ENCODE measurements at regions of chr7 and their contacts with region 1.

Region 1: GRCh38 chr7:121372376-121373010 is 23.6 kb downstream of the FAM3C start:
- DNase-seq: peak; percentile 64
- ATAC-seq: peak; percentile 69
- H3K4me3 ChIP-seq: peak overlapping the region in 3 of 5 experiments; percentile 6 to 50 (median 8)
- H3K4me3 Mint-ChIP-seq: peak overlapping the region; percentile 66
- H3K27ac ChIP-seq: peak overlapping the region; percentile 89 to 94
- H3K27ac Mint-ChIP-seq: peak overlapping the region; percentile 86
- H3K4me1 ChIP-seq: peaks cover 87% of the 10 kb centered on the region in 2 donors
- H3K4me1 Mint-ChIP-seq: peaks cover 80% of the 10 kb centered on the region
- H3K27me3 ChIP-seq: no peaks in the 10 kb centered on the region
- H3K27me3 Mint-ChIP-seq: no peaks in the 10 kb centered on the region
- CTCF ChIP-seq: no peak

Region 2: DNA sequence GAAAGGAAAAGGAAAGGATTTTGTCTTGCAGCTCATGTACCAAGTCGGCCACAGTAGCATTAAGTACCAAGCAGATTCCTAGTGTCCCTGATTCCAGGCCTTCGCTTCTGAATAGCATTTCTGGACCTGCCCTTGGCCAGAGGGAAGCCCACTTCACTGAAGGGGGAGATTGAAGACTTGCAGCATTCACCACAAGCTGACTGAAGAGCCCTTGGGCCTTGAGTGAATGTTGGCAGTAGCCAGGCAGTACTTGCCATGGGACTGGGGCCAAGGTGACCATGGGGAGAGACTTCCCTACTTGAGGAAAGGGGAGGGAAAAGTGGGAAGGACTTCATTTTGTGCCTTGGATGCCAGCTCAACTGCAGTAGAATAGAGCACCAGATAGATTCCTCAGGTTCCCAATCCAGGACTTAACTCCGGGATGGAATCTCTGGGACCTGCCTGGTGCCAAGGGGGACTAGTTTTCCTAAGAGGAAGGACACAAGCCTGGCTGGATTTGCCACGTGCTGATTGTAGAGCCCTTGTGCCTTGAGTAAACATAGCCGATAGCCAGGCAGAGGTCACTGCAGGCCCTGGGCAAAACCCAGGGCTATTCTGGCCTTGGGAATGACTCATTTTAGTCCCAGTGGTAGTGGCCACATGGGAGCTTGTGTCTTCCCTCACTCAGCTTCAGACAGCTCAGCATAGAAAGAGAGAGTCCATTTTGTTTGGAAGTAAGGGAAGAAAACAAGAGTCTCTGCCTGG is 1241.2 kb before region 1 on chr7:
- CTCF ChIA-PET with region 1: no interaction called
- POLR2A ChIA-PET with region 1: no interaction called
- intact Hi-C with region 1: no loop called
- DNase-seq: no peak
- ATAC-seq: no peak
- H3K4me3 ChIP-seq: no peak overlapping the region
- H3K4me3 Mint-ChIP-seq: no peak overlapping the region
- H3K27ac ChIP-seq: no peak overlapping the region
- H3K27ac Mint-ChIP-seq: no peak overlapping the region
- H3K4me1 ChIP-seq: no peaks in the 10 kb centered on the region
- H3K4me1 Mint-ChIP-seq: no peaks in the 10 kb centered on the region
- H3K27me3 ChIP-seq: no peaks in the 10 kb centered on the region
- H3K27me3 Mint-ChIP-seq: no peaks in the 10 kb centered on the region
- CTCF ChIP-seq: no peak

Region 3: GRCh38 chr7:120293027-120293426 is 1079.5 kb before region 1 on chr7:
- CTCF ChIA-PET with region 1: no interaction called
- POLR2A ChIA-PET with region 1: no interaction called
- intact Hi-C with region 1: no loop called
- DNase-seq: no peak
- ATAC-seq: no peak
- H3K4me3 ChIP-seq: no peak overlapping the region
- H3K4me3 Mint-ChIP-seq: no peak overlapping the region
- H3K27ac ChIP-seq: no peak overlapping the region
- H3K27ac Mint-ChIP-seq: no peak overlapping the region
- H3K4me1 ChIP-seq: no peaks in the 10 kb centered on the region
- H3K4me1 Mint-ChIP-seq: no peaks in the 10 kb centered on the region
- H3K27me3 ChIP-seq: no peaks in the 10 kb centered on the region
- H3K27me3 Mint-ChIP-seq: no peaks in the 10 kb centered on the region
- CTCF ChIP-seq: no peak

Region 4: GRCh38 chr7:120512701-120513100 is 859.8 kb before region 1 on chr7:
- CTCF ChIA-PET with region 1: no interaction called
- POLR2A ChIA-PET with region 1: no interaction called
- intact Hi-C with region 1: no loop called
- DNase-seq: no peak
- ATAC-seq: no peak
- H3K4me3 ChIP-seq: no peak overlapping the region
- H3K4me3 Mint-ChIP-seq: no peak overlapping the region
- H3K27ac ChIP-seq: no peak overlapping the region
- H3K27ac Mint-ChIP-seq: no peak overlapping the region
- H3K4me1 ChIP-seq: no peaks in the 10 kb centered on the region
- H3K4me1 Mint-ChIP-seq: no peaks in the 10 kb centered on the region
- H3K27me3 ChIP-seq: no peaks in the 10 kb centered on the region
- H3K27me3 Mint-ChIP-seq: no peaks in the 10 kb centered on the region
- CTCF ChIP-seq: no peak

Region 5: DNA sequence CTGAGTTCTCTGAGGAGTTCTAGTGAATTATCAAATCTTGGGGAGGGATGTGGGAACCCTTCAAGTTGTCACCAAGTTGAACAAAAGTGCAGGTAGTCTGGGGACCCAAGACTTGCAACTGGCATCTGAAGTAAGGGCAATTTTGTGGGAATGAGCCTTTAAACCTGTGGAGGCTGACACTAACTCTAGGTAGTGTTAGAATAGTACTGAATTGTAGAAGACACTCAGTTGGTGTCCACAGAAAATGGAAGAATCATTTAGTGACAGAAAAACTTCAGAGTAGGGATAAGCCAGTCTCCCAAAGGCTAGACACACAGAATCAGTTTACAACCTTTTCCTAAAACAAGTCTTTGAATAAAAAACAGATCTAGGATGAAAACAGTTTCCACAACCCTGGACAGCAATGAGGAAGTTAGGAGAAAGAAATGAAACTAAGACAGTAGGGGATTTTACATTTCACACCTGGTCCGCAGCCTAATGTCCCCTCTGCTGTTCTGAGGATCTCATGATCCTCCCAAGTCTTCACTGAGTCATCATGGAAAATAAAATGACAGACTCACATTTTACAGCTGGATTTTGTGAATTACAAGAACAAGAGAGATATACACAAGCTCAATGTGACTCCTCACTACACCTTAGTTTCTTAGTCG is 444.9 kb before region 1 on chr7:
- CTCF ChIA-PET with region 1: no interaction called
- POLR2A ChIA-PET with region 1: no interaction called
- intact Hi-C with region 1: no loop called
- DNase-seq: peak; percentile 51
- ATAC-seq: peak; percentile 39
- H3K4me3 ChIP-seq: no peak overlapping the region
- H3K4me3 Mint-ChIP-seq: peak overlapping the region; percentile 13
- H3K27ac ChIP-seq: no peak overlapping the region
- H3K27ac Mint-ChIP-seq: no peak overlapping the region
- H3K4me1 ChIP-seq: peaks cover 6 to 8% of the 10 kb centered on the region in 2 donors
- H3K4me1 Mint-ChIP-seq: peaks cover 12% of the 10 kb centered on the region
- H3K27me3 ChIP-seq: peaks cover 0 to 5% (median 0%) of the 10 kb centered on the region in 4 experiments
- H3K27me3 Mint-ChIP-seq: peaks cover 30% of the 10 kb centered on the region
- CTCF ChIP-seq: no peak

Region 6: DNA sequence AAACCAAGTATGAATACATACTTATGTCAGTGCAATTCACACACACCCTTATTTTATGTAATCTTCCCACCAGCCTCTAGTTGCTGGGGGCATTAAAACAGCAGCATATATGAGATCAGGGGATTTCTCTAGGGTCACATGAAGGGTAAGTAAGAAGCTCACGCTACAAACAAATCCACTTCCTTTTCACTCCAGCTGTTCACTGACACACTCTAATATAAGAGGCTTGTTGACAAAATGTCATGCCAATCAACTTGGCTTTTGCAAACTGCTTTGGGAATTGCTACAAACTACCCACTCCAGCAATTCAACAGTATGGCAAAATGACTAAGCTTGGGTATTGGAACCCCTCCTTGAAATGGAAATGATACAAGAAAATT is 13.3 kb after region 1 on chr7:
- CTCF ChIA-PET with region 1: interaction called, 43 read pairs
- POLR2A ChIA-PET with region 1: interaction called, 4 read pairs
- intact Hi-C with region 1: loop called (anchors 1 kb)
- DNase-seq: peak; percentile 89
- ATAC-seq: peak; percentile 89
- H3K4me3 ChIP-seq: peak overlapping the region in 1 of 5 experiments; percentile 37
- H3K4me3 Mint-ChIP-seq: peak overlapping the region; percentile 79
- H3K27ac ChIP-seq: peak overlapping the region; percentile 96 to 99
- H3K27ac Mint-ChIP-seq: peak overlapping the region; percentile 96
- H3K4me1 ChIP-seq: peaks cover 89 to 96% of the 10 kb centered on the region in 2 donors
- H3K4me1 Mint-ChIP-seq: peaks cover 92% of the 10 kb centered on the region
- H3K27me3 ChIP-seq: no peaks in the 10 kb centered on the region
- H3K27me3 Mint-ChIP-seq: no peaks in the 10 kb centered on the region
- CTCF ChIP-seq: no peak

Region 7: GRCh38 chr7:121440857-121441503 is 68.5 kb after region 1 on chr7:
- CTCF ChIA-PET with region 1: interaction called, 29 read pairs
- POLR2A ChIA-PET with region 1: interaction called, 9 read pairs
- intact Hi-C with region 1: loop called (anchors 2 kb)
- DNase-seq: peak; percentile 40
- ATAC-seq: peak; percentile 39
- H3K4me3 ChIP-seq: peak overlapping the region in 4 of 5 experiments; percentile 7 to 39 (median 27)
- H3K4me3 Mint-ChIP-seq: peak overlapping the region; percentile 78
- H3K27ac ChIP-seq: peak overlapping the region; percentile 44 to 51
- H3K27ac Mint-ChIP-seq: peak overlapping the region; percentile 85
- H3K4me1 ChIP-seq: peaks cover 19 to 30% of the 10 kb centered on the region in 2 donors
- H3K4me1 Mint-ChIP-seq: peaks cover 36% of the 10 kb centered on the region
- H3K27me3 ChIP-seq: no peaks in the 10 kb centered on the region
- H3K27me3 Mint-ChIP-seq: no peaks in the 10 kb centered on the region
- CTCF ChIP-seq: no peak

Region 8: GRCh38 chr7:121530227-121531174 is 158.0 kb after region 1 on chr7:
- CTCF ChIA-PET with region 1: interaction called, 5 read pairs
- POLR2A ChIA-PET with region 1: interaction called, 4 read pairs
- intact Hi-C with region 1: loop called (anchors 5 kb)
- DNase-seq: peak; percentile 23
- ATAC-seq: peak; percentile 98
- H3K4me3 ChIP-seq: no peak overlapping the region
- H3K4me3 Mint-ChIP-seq: no peak overlapping the region
- H3K27ac ChIP-seq: no peak overlapping the region
- H3K27ac Mint-ChIP-seq: peak overlapping the region; percentile 39
- H3K4me1 ChIP-seq: peaks cover 0 to 6% of the 10 kb centered on the region in 2 donors
- H3K4me1 Mint-ChIP-seq: peaks cover 11% of the 10 kb centered on the region
- H3K27me3 ChIP-seq: peaks cover 0 to 3% (median 1%) of the 10 kb centered on the region in 4 experiments
- H3K27me3 Mint-ChIP-seq: peaks cover 5% of the 10 kb centered on the region
- CTCF ChIP-seq: no peak